GM12878 (cell line): ENCODE measurements at regions of chr10 and their contacts with region 1.

Region 1: GRCh38 chr10:66180581-66181318 is 745.1 kb upstream of the LRRTM3 start:
- DNase-seq: peak; percentile 20
- ATAC-seq: peak; percentile 89
- H3K4me3 ChIP-seq: no peak overlapping the region
- H3K27ac ChIP-seq: no peak overlapping the region
- H3K4me1 ChIP-seq: no peaks in the 10 kb centered on the region
- H3K27me3 ChIP-seq: no peaks in the 10 kb centered on the region
- CTCF ChIP-seq: peak; percentile 49 to 67 (median 57)
- EP300 ChIP-seq: no peak
- POLR2A ChIP-seq: no peak
- RAD21 ChIP-seq: peak; percentile 83

Region 2: DNA sequence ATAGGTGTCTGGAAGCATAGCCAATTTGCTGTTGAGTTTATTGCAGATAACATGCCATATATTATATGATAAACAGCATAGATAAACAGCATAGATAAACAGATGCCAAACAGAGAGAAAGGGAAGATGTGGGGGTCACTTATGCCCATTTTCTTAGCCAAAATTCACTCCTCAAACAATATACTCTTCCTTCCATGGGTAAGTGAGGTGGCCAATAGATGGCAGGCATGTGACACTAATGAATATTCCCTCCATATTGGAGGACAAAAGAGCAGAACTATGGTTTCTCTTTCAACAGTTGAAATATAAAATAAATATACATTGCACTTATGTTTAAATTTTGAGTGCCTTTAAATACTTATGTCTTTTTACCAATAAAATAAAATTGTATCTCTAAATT is 1446.8 kb before region 1 on chr10:
- CTCF ChIA-PET with region 1: interaction called, 15 read pairs
- POLR2A ChIA-PET with region 1: no interaction called
- RAD21 ChIA-PET with region 1: interaction called, 3 read pairs
- SMC1A ChIA-PET with region 1: interaction called, 3 read pairs
- in situ Hi-C with region 1: no loop called
- intact Hi-C with region 1: loop called (anchors 2 kb)
- DNase-seq: no peak
- ATAC-seq: peak; percentile 79
- H3K4me3 ChIP-seq: no peak overlapping the region
- H3K27ac ChIP-seq: no peak overlapping the region
- H3K4me1 ChIP-seq: no peaks in the 10 kb centered on the region
- H3K27me3 ChIP-seq: no peaks in the 10 kb centered on the region
- CTCF ChIP-seq: peak; percentile 17 to 47 (median 23); a peak in 3 of 6 replicates
- EP300 ChIP-seq: no peak
- POLR2A ChIP-seq: no peak
- RAD21 ChIP-seq: peak; percentile 59

Region 3: DNA sequence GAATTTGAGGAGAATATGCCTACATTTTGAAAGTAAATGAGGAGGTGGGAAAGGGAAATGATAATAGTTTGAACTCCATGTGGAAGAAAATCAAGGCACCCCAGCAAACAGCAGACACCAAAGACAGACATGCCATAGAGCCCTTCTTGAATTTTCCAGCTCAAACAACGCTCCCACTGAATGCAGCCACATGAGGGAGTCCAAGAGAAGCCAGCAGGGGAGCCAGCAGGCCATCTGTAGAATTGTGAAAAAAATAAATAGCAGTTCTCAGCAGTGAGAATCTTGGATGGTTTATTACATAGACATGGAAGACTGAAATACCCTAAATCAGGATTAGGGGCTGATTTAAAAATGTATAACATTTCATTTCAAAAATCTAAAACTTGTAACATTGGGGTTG is 822.2 kb before region 1 on chr10:
- CTCF ChIA-PET with region 1: no interaction called
- POLR2A ChIA-PET with region 1: no interaction called
- RAD21 ChIA-PET with region 1: interaction called, 3 read pairs
- SMC1A ChIA-PET with region 1: no interaction called
- in situ Hi-C with region 1: no loop called
- intact Hi-C with region 1: loop called (anchors 5 kb)
- DNase-seq: no peak
- ATAC-seq: peak; percentile 67
- H3K4me3 ChIP-seq: no peak overlapping the region
- H3K27ac ChIP-seq: no peak overlapping the region
- H3K4me1 ChIP-seq: no peaks in the 10 kb centered on the region
- H3K27me3 ChIP-seq: no peaks in the 10 kb centered on the region
- CTCF ChIP-seq: peak in 2 of 3 experiments; percentile 43 to 51; a peak in 3 of 6 replicates
- EP300 ChIP-seq: no peak
- POLR2A ChIP-seq: no peak
- RAD21 ChIP-seq: peak; percentile 64

Region 4: GRCh38 chr10:65555192-65555591 is 625.6 kb before region 1 on chr10:
- CTCF ChIA-PET with region 1: no interaction called
- POLR2A ChIA-PET with region 1: no interaction called
- RAD21 ChIA-PET with region 1: interaction called, 4 read pairs
- SMC1A ChIA-PET with region 1: no interaction called
- in situ Hi-C with region 1: no loop called
- intact Hi-C with region 1: loop called (anchors 10 kb)
- DNase-seq: no peak
- ATAC-seq: peak; percentile 42; the same call in 1 of the 3 replicates
- H3K4me3 ChIP-seq: no peak overlapping the region
- H3K27ac ChIP-seq: no peak overlapping the region
- H3K4me1 ChIP-seq: no peaks in the 10 kb centered on the region
- H3K27me3 ChIP-seq: no peaks in the 10 kb centered on the region
- CTCF ChIP-seq: 0 out of 6 replicates have a peak, but pooled peaks of 1 of the 3 experiments have one; percentile 5
- EP300 ChIP-seq: no peak
- POLR2A ChIP-seq: no peak
- RAD21 ChIP-seq: no peak